Endothelial cell of umbilical vein (primary cell): ENCODE measurements at regions of chr10 and their contacts with region 1.

Region 1: DNA sequence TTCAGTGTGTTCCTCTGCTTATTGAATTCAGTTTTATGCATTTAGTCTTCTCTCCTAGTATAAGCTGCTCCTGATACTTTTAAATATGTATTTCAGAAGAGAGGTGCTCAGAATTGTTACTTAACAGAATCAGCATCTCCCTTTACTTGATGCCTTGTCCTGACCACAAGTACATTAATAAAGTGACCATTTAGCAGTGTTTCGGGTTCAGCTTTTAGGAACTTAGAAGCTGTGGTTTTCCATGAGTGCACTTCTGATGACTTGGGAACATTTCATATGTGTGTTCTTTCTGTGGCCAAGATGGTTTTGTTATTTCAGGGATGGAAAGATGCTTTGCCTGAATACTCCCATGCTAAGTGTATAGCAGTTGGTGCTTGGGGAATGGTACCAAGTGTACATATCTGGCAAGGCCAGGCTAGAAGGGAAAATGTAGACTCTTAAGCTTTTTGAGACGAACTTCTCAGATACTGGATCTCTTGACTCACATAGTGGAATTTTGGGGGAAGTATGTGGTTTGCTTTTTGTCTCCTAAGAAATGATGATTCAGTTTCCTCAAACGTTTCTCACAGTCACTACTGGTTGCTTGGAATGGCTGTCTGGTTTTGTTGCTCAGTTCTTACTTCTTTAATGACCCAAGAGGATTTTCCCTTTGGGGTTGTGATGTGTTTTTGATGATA is 17.2 kb downstream of the SGPL1 start:
- DNase-seq: peak; percentile 80
- H3K4me3 ChIP-seq: peak overlapping the region in 1 of 3 experiments; percentile 3
- H3K27ac ChIP-seq: peak overlapping the region; percentile 87
- H3K4me1 ChIP-seq: peaks cover 33% of the 10 kb centered on the region
- H3K27me3 ChIP-seq: no peaks in the 10 kb centered on the region
- CTCF ChIP-seq: no peak
- POLR2A ChIP-seq: peak; percentile 28

Region 2: DNA sequence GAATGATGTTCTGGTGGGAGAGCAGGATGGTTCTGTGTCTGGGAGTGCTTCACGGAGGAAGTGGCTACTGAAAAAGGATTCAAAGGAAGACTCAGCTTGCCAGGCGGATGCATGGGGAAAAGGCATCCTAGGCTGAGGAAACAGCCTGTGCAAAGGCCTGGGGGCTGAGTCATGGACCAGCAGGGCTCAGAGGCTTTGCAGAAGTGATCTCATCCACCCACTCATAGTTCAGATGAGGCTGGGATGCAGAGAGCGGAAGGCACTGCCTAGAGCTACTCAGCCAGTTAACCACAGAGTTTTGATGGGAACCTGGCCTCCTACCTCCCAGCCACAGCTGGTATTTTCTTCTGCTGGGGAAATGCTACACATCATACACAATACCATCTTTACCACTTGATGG is 176.5 kb before region 1 on chr10:
- CTCF ChIA-PET with region 1: no interaction called
- POLR2A ChIA-PET with region 1: no interaction called
- dilution Hi-C with region 1: no loop called
- intact Hi-C with region 1: no loop called
- DNase-seq: peak; percentile 6
- H3K4me3 ChIP-seq: no peak overlapping the region
- H3K27ac ChIP-seq: no peak overlapping the region
- H3K4me1 ChIP-seq: no peaks in the 10 kb centered on the region
- H3K27me3 ChIP-seq: peaks cover 0 to 4% of the 10 kb centered on the region in 2 experiments
- CTCF ChIP-seq: no peak
- POLR2A ChIP-seq: no peak

Region 3: GRCh38 chr10:70815504-70816219 is 17.3 kb before region 1 on chr10 and contains the start of gene SGPL1:
- CTCF ChIA-PET with region 1: interaction called, 19 read pairs
- POLR2A ChIA-PET with region 1: no interaction called
- dilution Hi-C with region 1: no loop called
- intact Hi-C with region 1: loop called (anchors 2 kb)
- DNase-seq: peak; percentile 79
- H3K4me3 ChIP-seq: peak within 1 kb of the TSS; percentile 58 to 75 (median 59)
- H3K27ac ChIP-seq: peak within 1 kb of the TSS; percentile 23
- H3K4me1 ChIP-seq: peaks cover 3% of the 10 kb centered on the region
- H3K27me3 ChIP-seq: peaks cover 0 to 3% of the 10 kb centered on the region in 2 experiments
- CTCF ChIP-seq: peak; percentile 91 to 99
- POLR2A ChIP-seq: no peak
- total RNA-seq, gene SGPL1: 25.2 and 28.0 TPM in 2 replicates

Region 4: DNA sequence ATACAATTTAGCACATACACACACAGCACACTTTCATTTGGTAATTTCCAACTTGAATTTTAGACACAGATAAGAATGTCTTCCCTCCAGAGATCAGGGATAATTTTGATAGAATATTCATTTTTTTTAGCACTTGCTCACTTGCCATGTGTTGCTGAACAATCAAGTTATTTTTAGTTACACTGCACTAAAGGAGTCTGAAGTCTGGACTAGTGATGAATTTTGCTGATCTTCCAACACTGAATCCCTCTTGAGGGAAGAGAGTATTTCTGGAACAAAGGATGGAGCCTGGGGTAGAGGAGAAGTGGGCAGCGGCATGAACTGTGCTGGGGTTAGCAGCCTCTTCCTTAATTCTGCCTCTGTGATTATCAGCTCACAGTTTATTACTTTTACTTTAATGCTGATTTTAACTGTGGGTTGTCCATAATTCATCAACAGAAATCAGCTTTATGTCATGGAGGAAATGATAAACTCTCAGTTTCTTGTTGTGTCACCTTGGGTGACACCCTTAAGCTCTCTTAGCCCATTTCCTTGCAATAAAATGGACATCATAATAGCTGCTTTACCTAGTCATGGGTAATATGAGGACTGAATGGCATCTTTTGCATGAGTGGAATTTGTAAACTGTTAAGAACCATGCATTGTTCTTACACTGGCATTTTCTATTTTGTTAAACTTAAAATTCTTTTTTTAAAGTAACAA is 14.8 kb after region 1 on chr10:
- CTCF ChIA-PET with region 1: interaction called, 12 read pairs
- POLR2A ChIA-PET with region 1: no interaction called
- dilution Hi-C with region 1: no loop called
- intact Hi-C with region 1: no loop called
- DNase-seq: no peak
- H3K4me3 ChIP-seq: no peak overlapping the region
- H3K27ac ChIP-seq: no peak overlapping the region
- H3K4me1 ChIP-seq: no peaks in the 10 kb centered on the region
- H3K27me3 ChIP-seq: no peaks in the 10 kb centered on the region
- CTCF ChIP-seq: no peak
- POLR2A ChIP-seq: no peak

Region 5: GRCh38 chr10:70863470-70864160 is 30.6 kb after region 1 on chr10:
- CTCF ChIA-PET with region 1: interaction called, 4 read pairs
- POLR2A ChIA-PET with region 1: no interaction called
- dilution Hi-C with region 1: no loop called
- intact Hi-C with region 1: loop called (anchors 1 kb)
- DNase-seq: no peak
- H3K4me3 ChIP-seq: no peak overlapping the region
- H3K27ac ChIP-seq: no peak overlapping the region
- H3K4me1 ChIP-seq: no peaks in the 10 kb centered on the region
- H3K27me3 ChIP-seq: no peaks in the 10 kb centered on the region
- CTCF ChIP-seq: no peak
- POLR2A ChIP-seq: no peak